ENCODE measurements at regions of chr13 and their contacts with region 1.

Region 1: GRCh38 chr13:97359181-97360057 is 74.5 kb upstream of the RAP2A start:
- DNase-seq: no peak
- ATAC-seq: peak; percentile 84

Region 2: DNA sequence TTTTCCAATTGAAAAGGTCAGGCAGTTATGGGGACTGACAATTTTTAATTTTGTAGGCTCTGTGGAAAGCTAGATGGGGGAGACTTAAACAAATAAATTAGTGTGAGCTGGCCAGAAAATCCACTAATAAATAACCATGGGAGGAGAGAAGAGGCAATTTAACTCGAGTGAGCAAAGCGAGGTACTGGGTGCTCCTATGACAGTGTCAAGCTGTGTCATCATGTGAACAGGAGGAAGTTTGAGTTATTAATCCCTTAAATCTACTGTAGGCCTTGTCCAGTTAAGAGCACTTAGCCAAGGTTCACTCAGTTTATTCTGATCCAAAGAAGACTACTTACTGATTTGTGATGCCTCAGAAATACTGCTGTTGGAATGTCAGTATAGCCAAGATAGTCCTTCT is 487.9 kb before region 1 on chr13:
- intact Hi-C with region 1: no loop called
- DNase-seq: no peak
- ATAC-seq: no peak

Region 3: DNA sequence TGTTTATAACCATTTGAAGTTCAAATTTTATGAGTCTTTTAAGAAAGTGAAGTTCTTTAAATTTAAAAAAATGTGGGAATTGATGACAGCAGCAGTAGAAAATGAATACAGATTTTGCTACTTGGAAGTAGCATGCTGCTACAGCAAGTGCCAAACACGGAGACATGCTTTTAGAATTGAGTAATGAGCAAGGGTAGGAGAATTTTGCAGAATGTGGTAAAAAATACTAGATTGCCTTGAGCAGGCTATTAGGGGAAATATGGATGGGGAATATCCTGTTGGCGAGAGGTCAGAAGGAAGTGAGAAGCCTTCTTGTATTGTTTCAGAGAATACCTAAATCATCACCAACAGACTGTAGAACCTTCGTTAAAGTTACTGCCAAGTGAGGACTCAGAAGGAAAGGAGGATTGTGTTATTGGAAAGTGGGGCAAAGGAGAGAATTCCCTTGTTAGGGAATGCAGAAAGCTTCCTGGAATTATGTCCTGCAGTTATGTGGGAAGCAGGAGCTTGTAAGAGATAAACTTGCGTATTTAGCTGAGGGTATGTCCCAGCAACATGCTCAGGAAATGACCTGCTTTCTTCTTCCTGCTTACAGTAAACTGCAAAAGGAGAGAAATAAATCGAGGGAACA is 332.8 kb before region 1 on chr13:
- intact Hi-C with region 1: loop called in 1 of 2 experiments (anchors 10 kb)
- DNase-seq: no peak
- ATAC-seq: peak; percentile 22

Region 4: GRCh38 chr13:98142380-98143156 is 783.1 kb after region 1 on chr13 and contains the start of gene FARP1:
- intact Hi-C with region 1: no loop called
- DNase-seq: peak; percentile 63 to 80
- ATAC-seq: peak; percentile 93
- total RNA-seq, gene FARP1: 38.8 to 50.3 TPM